GM10248 (cell line): ENCODE measurements at regions of chr1 and their contacts with region 1.

Region 1: GRCh38 chr1:221203224-221204054 is 324.2 kb downstream of the HLX start:
- DNase-seq: peak; percentile 61
- CTCF ChIP-seq: peak; percentile 96

Region 2: DNA sequence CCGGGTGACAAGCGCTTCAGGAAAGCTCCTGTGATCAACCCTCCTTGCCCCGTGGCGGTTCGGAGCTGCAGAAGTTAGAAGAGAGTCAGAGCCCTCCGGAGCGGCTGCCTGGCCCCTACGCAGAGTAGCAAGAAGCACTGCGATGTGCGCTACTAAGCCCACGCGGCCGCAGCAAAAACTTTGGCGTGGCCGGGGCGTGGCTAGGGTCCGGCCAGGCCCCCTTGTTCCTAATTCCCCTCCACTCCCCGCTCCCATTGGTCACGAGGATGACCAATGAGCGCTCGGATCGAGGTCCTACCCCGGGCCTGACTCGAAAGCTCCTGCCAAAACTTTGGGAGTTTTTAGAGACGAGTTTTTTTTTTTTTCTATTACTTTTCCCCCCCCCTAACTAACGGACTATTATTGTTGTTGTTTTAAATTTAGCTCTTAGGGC is 324.3 kb before region 1 on chr1 and contains the start of gene HLX:
- CTCF ChIA-PET with region 1: interaction called, 78 read pairs
- POLR2A ChIA-PET with region 1: no interaction called
- DNase-seq: peak; percentile 80
- CTCF ChIP-seq: no peak

Region 3: DNA sequence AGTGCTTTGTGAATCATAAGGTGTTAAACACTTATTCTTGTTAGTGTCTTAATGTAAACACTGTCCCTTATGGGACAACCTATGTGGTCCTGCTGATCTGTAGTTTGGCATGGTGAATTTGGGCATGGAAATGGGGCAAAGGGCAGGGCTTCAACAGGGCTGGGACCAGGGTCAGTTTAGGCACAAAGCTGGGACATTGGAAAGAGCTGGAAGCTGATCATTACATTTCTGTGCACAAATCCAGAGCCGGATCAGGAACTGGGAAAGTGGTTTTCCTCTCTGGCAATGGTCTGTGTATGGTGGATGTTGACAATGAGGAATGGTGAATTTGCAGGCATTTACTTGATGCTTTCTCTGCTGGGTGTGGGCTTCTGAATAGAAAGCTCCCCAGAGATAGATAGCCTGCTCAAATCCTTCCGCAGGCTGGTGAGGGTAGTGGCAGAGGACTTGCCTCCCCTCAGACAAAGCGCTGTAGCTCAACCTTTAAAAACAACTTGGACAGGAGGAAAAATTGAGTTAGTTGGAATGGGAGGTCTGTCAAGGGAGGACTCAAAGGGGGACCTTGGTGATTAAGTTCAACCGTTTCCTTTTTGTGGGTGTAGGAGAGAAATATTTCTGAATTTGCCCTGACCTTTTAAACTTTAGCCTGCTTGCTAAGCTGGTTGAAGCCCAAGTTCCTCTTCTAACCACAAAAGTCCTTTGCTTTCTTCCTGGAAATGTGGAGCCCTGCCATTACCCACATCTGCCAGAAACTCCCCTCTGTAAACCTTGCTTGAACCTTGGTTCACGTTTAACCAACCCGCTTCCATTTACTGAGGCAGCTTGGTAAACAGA is 288.9 kb before region 1 on chr1:
- CTCF ChIA-PET with region 1: interaction called, 60 read pairs
- POLR2A ChIA-PET with region 1: no interaction called
- DNase-seq: no peak
- CTCF ChIP-seq: no peak

Region 4: GRCh38 chr1:220983877-220984635 is 219.4 kb before region 1 on chr1:
- CTCF ChIA-PET with region 1: no interaction called
- POLR2A ChIA-PET with region 1: no interaction called
- DNase-seq: no peak
- CTCF ChIP-seq: no peak

Region 5: GRCh38 chr1:221192055-221192454 is 11.4 kb before region 1 on chr1:
- CTCF ChIA-PET with region 1: interaction called, 14 read pairs
- POLR2A ChIA-PET with region 1: no interaction called
- DNase-seq: no peak
- CTCF ChIP-seq: no peak

Region 6: DNA sequence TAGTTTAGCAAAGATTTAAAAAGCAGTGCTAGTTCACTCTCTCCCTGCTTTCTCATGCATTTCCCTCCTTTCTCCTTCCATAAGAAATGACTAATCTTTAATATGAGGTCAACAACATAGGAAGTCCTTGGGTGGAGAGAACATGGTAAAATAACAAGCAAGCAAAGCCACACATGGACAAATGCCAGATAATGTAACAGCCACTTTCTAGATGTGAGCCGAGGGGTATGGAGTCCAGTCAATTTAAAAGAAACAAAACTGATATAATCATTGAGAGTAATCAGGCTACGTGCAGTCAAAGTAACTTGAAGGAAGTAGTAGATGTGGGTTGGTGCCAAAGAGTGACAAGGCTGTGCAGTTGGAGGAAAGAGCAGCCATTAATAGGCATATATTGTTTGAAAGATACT is 468.8 kb after region 1 on chr1:
- CTCF ChIA-PET with region 1: no interaction called
- POLR2A ChIA-PET with region 1: no interaction called
- DNase-seq: no peak
- CTCF ChIP-seq: no peak